ENCODE measurements at regions of chr6 and their contacts with region 1.

Region 1: GRCh38 chr6:165729307-165729936 is 66.4 kb upstream of the PDE10A start:
- DNase-seq: peak in 1 of 2 experiments; percentile 55
- H3K4me3 ChIP-seq: no peak overlapping the region
- H3K4me3 Mint-ChIP-seq: no peak overlapping the region
- H3K27ac Mint-ChIP-seq: no peak overlapping the region
- H3K4me1 ChIP-seq: no peaks in the 10 kb centered on the region
- H3K4me1 Mint-ChIP-seq: no peaks in the 10 kb centered on the region
- H3K27me3 ChIP-seq: no peaks in the 10 kb centered on the region
- H3K27me3 Mint-ChIP-seq: no peaks in the 10 kb centered on the region
- CTCF ChIP-seq: peak; percentile 68 to 87

Region 2: DNA sequence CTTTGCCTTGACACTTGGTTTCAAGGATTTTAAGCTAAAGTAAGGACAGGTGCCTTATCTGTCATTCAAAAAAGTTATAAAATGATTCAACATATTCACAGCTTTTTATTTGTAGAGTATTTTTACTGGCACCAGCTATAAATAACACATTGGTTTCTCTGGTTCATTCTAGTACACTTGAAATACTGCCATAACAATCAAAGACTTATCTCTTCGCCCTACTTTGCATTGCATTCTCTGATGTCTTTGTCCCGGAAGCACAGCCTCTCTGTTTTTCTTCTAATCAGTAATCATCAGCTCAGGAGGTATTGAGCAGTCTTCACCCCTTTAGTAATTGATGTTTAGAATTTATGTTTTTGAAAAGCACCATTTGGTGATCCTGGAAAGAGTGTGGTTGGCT is 222.8 kb before region 1 on chr6:
- CTCF ChIA-PET with region 1: no interaction called
- POLR2A ChIA-PET with region 1: no interaction called
- intact Hi-C with region 1: no loop called
- DNase-seq: no peak
- H3K4me3 ChIP-seq: no peak overlapping the region
- H3K4me3 Mint-ChIP-seq: no peak overlapping the region
- H3K27ac Mint-ChIP-seq: no peak overlapping the region
- H3K4me1 ChIP-seq: peaks cover under 1% of the 10 kb centered on the region; the same call in 1 of the 2 replicates
- H3K4me1 Mint-ChIP-seq: no peaks in the 10 kb centered on the region
- H3K27me3 ChIP-seq: no peaks in the 10 kb centered on the region
- H3K27me3 Mint-ChIP-seq: no peaks in the 10 kb centered on the region
- CTCF ChIP-seq: no peak

Region 3: DNA sequence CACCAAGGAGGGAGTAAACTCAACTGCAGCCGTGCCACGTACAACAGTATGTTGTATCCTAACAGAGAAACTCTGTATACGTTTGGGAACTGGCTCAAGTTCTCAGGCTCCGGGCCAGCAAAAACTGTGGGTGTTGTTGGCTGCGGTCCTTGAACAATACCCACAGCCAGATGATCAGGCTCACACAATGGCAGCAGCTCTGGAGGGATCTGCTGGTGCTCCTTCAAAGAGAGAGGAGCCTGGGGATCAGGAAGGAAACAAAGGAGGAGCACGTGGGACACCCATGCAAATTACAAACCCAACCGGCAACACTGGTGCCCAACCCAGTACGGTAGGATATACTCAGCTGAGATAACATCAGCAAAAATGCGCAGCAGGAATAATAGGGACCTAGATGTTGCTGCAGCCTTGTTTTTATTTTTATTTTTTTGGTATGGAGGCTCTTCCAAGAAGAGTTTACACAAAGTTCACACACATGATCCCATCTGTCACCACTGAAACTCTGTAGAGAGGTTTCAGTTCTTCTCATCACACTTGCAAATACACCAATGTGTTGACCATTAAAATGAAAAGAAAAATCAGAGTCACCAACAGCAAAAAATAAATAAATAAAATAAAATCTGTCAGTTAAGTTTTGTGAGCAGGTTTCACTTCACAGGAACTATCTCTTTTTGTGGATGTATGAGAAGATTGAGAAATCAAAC is 25.2 kb before region 1 on chr6:
- CTCF ChIA-PET with region 1: no interaction called
- POLR2A ChIA-PET with region 1: no interaction called
- intact Hi-C with region 1: no loop called
- DNase-seq: no peak
- H3K4me3 ChIP-seq: no peak overlapping the region
- H3K4me3 Mint-ChIP-seq: no peak overlapping the region
- H3K27ac Mint-ChIP-seq: no peak overlapping the region
- H3K4me1 ChIP-seq: peaks cover 21% of the 10 kb centered on the region
- H3K4me1 Mint-ChIP-seq: peaks cover 13% of the 10 kb centered on the region
- H3K27me3 ChIP-seq: no peaks in the 10 kb centered on the region
- H3K27me3 Mint-ChIP-seq: no peaks in the 10 kb centered on the region
- CTCF ChIP-seq: no peak

Region 4: DNA sequence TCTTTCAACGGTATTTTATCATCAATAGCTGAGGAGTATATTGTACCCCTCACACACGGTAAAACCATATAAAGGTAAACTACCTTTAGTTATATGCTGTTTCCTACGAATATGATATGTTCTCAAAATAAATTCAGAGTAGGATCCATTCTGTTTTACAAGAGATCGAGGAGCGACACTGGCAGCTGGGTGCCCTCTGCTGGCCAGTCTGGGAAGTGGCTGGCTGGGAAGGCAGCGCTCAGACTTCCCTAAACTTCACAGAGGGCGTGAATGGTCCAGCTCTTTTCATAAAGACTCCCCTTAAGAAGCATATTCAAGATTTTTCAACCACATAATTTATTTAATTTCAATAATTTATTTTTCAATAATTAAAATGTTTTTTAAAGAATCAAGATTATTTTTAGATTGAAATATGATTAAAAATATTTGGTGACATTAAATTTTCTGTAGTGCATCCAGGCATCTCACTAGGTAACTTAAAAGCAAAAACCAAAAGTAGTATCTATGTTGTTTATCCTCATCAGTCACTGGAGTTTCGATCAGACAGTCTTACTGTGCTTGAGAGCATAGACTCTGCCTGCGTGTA is 121.1 kb after region 1 on chr6:
- CTCF ChIA-PET with region 1: no interaction called
- POLR2A ChIA-PET with region 1: no interaction called
- intact Hi-C with region 1: loop called (anchors 1 kb)
- DNase-seq: peak; percentile 59 to 73
- H3K4me3 ChIP-seq: no peak overlapping the region
- H3K4me3 Mint-ChIP-seq: no peak overlapping the region
- H3K27ac Mint-ChIP-seq: no peak overlapping the region
- H3K4me1 ChIP-seq: no peaks in the 10 kb centered on the region
- H3K4me1 Mint-ChIP-seq: no peaks in the 10 kb centered on the region
- H3K27me3 ChIP-seq: no peaks in the 10 kb centered on the region
- H3K27me3 Mint-ChIP-seq: peaks cover 6% of the 10 kb centered on the region
- CTCF ChIP-seq: peak; percentile 78 to 96